ENCODE measurements at regions of chr2 and their contacts with region 1.

Region 1: GRCh38 chr2:70086838-70087701 is at the start of gene PCBP1:
- H3K4me3 Mint-ChIP-seq: peak within 1 kb of the TSS; percentile 95
- H3K27ac Mint-ChIP-seq: peak within 1 kb of the TSS; percentile 99
- H3K4me1 Mint-ChIP-seq: peaks cover 56% of the 10 kb centered on the region
- H3K27me3 Mint-ChIP-seq: no peaks in the 10 kb centered on the region

Region 2: DNA sequence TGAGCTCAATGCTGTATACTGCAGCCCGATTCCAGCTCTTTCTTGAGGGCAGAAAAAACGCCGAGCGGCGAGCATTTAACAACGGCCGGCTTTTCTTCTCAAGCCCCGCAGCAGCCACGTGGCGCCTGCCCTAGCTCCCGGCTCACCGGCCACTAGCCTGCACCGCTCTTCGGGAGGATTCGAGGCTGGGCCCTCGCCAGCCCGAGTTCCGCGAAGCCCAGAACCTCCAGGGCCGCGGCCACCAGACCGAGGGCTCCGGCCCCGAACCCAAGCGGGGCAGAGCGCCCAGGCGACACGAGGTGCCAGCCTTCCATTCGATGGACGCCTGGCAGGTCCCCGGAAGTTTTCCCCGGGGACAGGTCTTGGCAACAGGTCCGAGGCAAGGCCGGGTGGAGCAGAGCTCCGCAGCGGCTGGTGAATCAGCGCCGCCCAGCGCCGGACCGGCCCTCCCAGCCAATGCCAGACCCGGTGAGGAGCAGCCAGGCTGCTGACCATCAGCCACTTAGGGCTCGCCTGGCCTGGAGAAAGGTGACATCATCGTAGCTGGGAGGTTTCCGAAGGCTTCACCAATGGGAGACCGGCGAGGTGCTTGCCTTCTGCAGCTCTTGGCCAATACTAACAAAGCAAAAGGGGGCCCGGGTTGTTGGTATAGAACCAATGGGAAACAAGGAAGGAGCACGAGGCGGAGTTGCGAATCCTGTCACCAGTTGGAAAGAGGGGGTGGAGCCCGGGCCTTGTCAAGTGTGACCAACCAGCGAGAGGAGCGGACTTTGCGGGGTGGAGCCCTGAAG is 172.7 kb before region 1 on chr2:
- intact Hi-C with region 1: loop called (anchors 2 kb)
- H3K4me3 Mint-ChIP-seq: peak overlapping the region; percentile 83
- H3K27ac Mint-ChIP-seq: peak overlapping the region; percentile 91
- H3K4me1 Mint-ChIP-seq: peaks cover 15% of the 10 kb centered on the region
- H3K27me3 Mint-ChIP-seq: no peaks in the 10 kb centered on the region

Region 3: GRCh38 chr2:70104231-70105111 is 17.4 kb after region 1 on chr2:
- intact Hi-C with region 1: loop called (anchors 1 kb)
- H3K4me3 Mint-ChIP-seq: peak overlapping the region; percentile 37
- H3K27ac Mint-ChIP-seq: peak overlapping the region; percentile 84
- H3K4me1 Mint-ChIP-seq: peaks cover 46% of the 10 kb centered on the region
- H3K27me3 Mint-ChIP-seq: no peaks in the 10 kb centered on the region

Region 4: DNA sequence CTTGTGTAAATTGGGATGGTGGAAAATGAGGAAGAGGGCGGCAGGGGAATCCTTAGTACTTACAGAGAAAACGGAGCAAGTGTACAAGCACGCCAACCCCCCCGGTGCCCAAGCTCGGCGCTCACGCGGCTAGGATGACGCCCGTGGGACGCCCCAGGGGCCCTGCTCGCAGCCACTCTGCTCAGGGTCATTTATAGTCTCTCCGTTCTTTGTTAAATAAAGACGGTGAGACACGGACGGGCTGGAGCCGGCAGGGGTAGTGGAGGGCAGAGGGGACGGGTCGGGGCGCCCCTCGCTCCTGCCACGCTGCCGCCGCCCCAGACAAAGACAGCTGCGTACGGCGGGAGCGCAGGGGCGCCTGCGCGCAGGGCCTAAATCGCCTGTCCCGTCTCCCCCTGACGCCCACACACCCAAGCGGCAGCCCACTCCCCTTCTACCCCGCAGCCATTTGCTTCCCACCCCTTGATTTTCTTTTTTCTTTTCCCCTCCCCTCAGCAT is 38.0 kb after region 1 on chr2:
- intact Hi-C with region 1: loop called (anchors 1 kb)
- H3K4me3 Mint-ChIP-seq: peak overlapping the region; percentile 74
- H3K27ac Mint-ChIP-seq: peak overlapping the region; percentile 100
- H3K4me1 Mint-ChIP-seq: peaks cover 85% of the 10 kb centered on the region
- H3K27me3 Mint-ChIP-seq: no peaks in the 10 kb centered on the region

Measured in dendritic cell treated with granulocyte-macrophage colony-stimulating factor and Interleukin-4, amounts not matched to agents 40 ng/mL and 50 ng/mL, for 4 days (primary cell).